B cell (primary cell): ENCODE measurements at regions of chr14 and their contacts with region 1.

Region 1: DNA sequence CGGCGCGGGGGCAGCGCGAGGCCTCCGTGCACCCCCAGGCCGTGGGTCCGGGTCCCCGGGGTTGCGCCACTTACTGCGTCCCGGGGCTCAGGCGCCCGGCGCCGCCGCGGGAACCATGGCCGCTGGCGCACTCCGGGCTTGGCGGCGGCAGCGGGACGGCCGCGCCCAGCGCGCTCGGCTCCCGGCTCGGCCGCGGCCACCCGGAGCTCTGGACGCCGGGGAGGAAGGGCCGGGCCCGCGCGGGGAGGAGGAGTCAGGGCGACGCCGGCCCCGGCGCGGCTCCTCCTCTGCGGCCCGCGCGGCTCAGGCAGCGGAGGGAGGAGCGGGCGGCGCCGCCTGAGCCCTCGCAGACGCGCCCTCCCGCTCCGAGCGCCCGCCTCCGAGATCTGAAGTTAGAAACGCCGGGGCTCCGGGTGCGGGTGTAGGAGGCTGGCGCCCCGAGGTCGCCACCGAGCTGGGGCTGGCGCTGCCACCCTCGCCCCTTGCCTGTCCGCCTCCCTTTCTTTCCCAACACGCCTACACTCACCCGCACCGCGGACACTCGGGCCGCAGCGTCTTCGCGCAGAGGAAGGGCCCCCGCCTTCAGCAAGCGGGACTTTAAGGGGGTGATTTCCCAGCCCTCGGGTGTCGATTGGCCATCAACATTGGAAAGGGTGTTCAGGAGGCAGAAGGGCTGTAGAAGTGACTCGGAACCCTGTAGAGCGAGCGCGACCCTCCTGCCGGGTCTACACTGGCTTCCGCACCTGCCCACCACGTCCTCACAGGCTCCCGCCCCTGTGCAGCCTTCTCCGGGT is at the start of gene NIN:
- DNase-seq: peak; percentile 88
- ATAC-seq: peak; percentile 83
- H3K4me3 ChIP-seq: peak within 1 kb of the TSS; percentile 70 to 90 (median 71)
- H3K4me3 Mint-ChIP-seq: peak within 1 kb of the TSS; percentile 99
- H3K27ac ChIP-seq: peak within 1 kb of the TSS; percentile 93 to 95
- H3K27ac Mint-ChIP-seq: peak within 1 kb of the TSS; percentile 99
- H3K4me1 ChIP-seq: peaks cover 49 to 60% of the 10 kb centered on the region in 2 donors
- H3K4me1 Mint-ChIP-seq: peaks cover 66% of the 10 kb centered on the region
- H3K27me3 ChIP-seq: no peaks in the 10 kb centered on the region
- H3K27me3 Mint-ChIP-seq: no peaks in the 10 kb centered on the region
- CTCF ChIP-seq: no peak
- total RNA-seq, gene NIN: 211 and 219 TPM in 2 replicates

Region 2: GRCh38 chr14:49451938-49452337 is 1379.2 kb before region 1 on chr14:
- CTCF ChIA-PET with region 1: no interaction called
- POLR2A ChIA-PET with region 1: no interaction called
- intact Hi-C with region 1: no loop called
- DNase-seq: no peak
- ATAC-seq: no peak
- H3K4me3 ChIP-seq: no peak overlapping the region
- H3K4me3 Mint-ChIP-seq: no peak overlapping the region
- H3K27ac ChIP-seq: no peak overlapping the region
- H3K27ac Mint-ChIP-seq: no peak overlapping the region
- H3K4me1 ChIP-seq: no peaks in the 10 kb centered on the region
- H3K4me1 Mint-ChIP-seq: no peaks in the 10 kb centered on the region
- H3K27me3 ChIP-seq: peaks cover 0 to 5% (median 2%) of the 10 kb centered on the region in 4 experiments
- H3K27me3 Mint-ChIP-seq: peaks cover 37% of the 10 kb centered on the region
- CTCF ChIP-seq: no peak

Region 3: DNA sequence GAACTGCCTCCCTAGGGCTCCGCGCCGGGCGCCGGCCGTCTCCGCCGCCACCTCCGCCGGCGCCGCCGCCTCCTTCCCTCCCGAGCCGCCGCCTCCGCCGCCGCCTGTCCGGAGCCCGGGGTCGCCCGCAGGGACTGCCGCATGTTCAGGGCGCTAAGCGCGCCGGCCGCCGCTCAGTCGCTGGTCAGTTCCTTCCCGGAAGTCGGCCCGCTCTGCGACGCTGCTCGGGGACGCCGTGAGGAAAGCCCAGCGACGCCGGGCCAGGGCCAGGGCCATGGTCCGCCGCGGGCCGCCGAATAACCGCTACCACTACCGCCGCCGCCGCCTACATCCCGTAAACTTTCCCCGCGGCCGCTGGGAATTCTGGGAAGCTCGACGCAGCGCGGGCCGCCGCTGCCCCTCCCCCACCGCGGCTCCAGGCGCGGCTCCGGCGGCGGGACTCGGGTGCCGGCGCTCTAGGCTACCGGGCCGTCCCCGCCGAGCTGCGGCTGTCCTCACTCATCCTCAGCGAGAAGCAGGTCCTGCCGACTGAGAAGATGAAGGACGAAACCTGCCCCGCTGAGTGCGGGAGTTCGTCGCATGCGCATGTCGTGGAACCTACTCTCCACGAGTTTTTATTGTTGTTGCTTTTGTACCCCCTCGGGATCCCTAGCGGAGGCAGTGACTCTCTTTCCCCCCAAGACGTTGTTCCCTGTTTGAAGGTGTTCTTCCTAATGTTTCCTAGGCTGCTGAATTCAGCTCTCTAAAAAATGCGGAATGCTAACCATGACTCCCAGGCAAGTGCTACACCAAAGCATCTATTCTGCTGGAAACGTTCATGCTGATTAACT is 162.9 kb before region 1 on chr14 and contains the start of gene SAV1:
- CTCF ChIA-PET with region 1: no interaction called
- POLR2A ChIA-PET with region 1: no interaction called
- intact Hi-C with region 1: loop called (anchors 5 kb)
- DNase-seq: peak; percentile 80
- ATAC-seq: peak; percentile 63
- H3K4me3 ChIP-seq: peak within 1 kb of the TSS; percentile 47 to 93 (median 70)
- H3K4me3 Mint-ChIP-seq: no peak within 1 kb of the TSS
- H3K27ac ChIP-seq: peak within 1 kb of the TSS; percentile 83 to 91
- H3K27ac Mint-ChIP-seq: no peak within 1 kb of the TSS
- H3K4me1 ChIP-seq: peaks cover 22 to 42% of the 10 kb centered on the region in 2 donors
- H3K4me1 Mint-ChIP-seq: peaks cover 26% of the 10 kb centered on the region
- H3K27me3 ChIP-seq: no peaks in the 10 kb centered on the region
- H3K27me3 Mint-ChIP-seq: no peaks in the 10 kb centered on the region
- CTCF ChIP-seq: no peak
- total RNA-seq, gene SAV1: 36.1 and 39.7 TPM in 2 replicates

Region 4: GRCh38 chr14:50756300-50756699 is 74.8 kb before region 1 on chr14:
- CTCF ChIA-PET with region 1: interaction called, 3 read pairs
- POLR2A ChIA-PET with region 1: no interaction called
- intact Hi-C with region 1: loop called (anchors 2 kb)
- DNase-seq: peak; percentile 95
- ATAC-seq: peak; percentile 93
- H3K4me3 ChIP-seq: no peak overlapping the region
- H3K4me3 Mint-ChIP-seq: no peak overlapping the region
- H3K27ac ChIP-seq: peak overlapping the region; percentile 92 to 93
- H3K27ac Mint-ChIP-seq: no peak overlapping the region
- H3K4me1 ChIP-seq: peaks cover 15 to 21% of the 10 kb centered on the region in 2 donors
- H3K4me1 Mint-ChIP-seq: peaks cover 4% of the 10 kb centered on the region
- H3K27me3 ChIP-seq: no peaks in the 10 kb centered on the region
- H3K27me3 Mint-ChIP-seq: no peaks in the 10 kb centered on the region
- CTCF ChIP-seq: no peak

Region 5: DNA sequence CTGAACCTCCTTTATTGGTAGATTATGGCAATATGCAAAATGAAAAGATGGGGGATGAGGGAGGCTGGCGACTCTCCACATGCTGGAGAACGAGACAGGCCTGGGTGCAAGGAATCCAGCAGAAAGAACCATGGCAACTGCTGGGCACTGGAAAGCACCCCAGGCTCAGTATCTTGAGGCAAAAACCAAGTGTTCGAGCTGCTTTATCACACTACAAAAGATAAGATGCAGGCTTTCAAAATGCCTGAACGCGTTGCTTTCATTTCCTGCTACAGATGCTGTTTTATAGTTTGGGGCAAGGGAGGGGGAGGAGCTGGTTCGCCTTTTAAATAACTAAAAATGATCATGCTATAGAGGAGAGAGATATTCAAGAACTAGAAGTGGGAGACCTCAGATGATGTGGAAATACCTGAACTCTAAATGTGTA is 39.1 kb before region 1 on chr14:
- CTCF ChIA-PET with region 1: interaction called, 8 read pairs
- POLR2A ChIA-PET with region 1: interaction called, 16 read pairs
- intact Hi-C with region 1: loop called (anchors 1 kb)
- DNase-seq: peak; percentile 64
- ATAC-seq: peak; percentile 26
- H3K4me3 ChIP-seq: peak overlapping the region in 3 of 5 experiments; percentile 5 to 41 (median 24)
- H3K4me3 Mint-ChIP-seq: peak overlapping the region; percentile 61
- H3K27ac ChIP-seq: peak overlapping the region; percentile 42 to 91
- H3K27ac Mint-ChIP-seq: peak overlapping the region; percentile 73
- H3K4me1 ChIP-seq: peaks cover 99 to 100% of the 10 kb centered on the region in 2 donors
- H3K4me1 Mint-ChIP-seq: peaks cover 96% of the 10 kb centered on the region
- H3K27me3 ChIP-seq: no peaks in the 10 kb centered on the region
- H3K27me3 Mint-ChIP-seq: no peaks in the 10 kb centered on the region
- CTCF ChIP-seq: no peak

Region 6: DNA sequence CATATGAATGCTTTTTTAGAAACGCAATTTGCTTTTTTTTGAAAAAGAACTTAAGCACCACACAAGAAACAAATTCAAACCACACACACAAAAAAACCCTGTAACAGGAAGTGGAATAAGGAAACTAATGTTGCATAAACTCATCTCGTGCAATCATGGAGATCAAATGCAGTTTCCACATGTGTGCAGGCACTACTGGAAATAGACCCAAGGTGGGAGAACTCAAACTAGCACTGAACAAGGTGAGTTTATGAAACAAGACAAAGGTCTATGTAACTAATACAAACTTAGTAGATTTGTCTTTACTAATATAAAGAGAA is 17.6 kb before region 1 on chr14:
- CTCF ChIA-PET with region 1: interaction called, 5 read pairs
- POLR2A ChIA-PET with region 1: interaction called, 3 read pairs
- intact Hi-C with region 1: loop called (anchors 2 kb)
- DNase-seq: peak; percentile 67
- ATAC-seq: peak; percentile 72
- H3K4me3 ChIP-seq: peak overlapping the region in 4 of 5 experiments; percentile 10 to 57 (median 40)
- H3K4me3 Mint-ChIP-seq: peak overlapping the region; percentile 84
- H3K27ac ChIP-seq: peak overlapping the region; percentile 38 to 54
- H3K27ac Mint-ChIP-seq: peak overlapping the region; percentile 90
- H3K4me1 ChIP-seq: peaks cover 46 to 49% of the 10 kb centered on the region in 2 donors
- H3K4me1 Mint-ChIP-seq: peaks cover 60% of the 10 kb centered on the region
- H3K27me3 ChIP-seq: no peaks in the 10 kb centered on the region
- H3K27me3 Mint-ChIP-seq: no peaks in the 10 kb centered on the region
- CTCF ChIP-seq: no peak

Region 7: DNA sequence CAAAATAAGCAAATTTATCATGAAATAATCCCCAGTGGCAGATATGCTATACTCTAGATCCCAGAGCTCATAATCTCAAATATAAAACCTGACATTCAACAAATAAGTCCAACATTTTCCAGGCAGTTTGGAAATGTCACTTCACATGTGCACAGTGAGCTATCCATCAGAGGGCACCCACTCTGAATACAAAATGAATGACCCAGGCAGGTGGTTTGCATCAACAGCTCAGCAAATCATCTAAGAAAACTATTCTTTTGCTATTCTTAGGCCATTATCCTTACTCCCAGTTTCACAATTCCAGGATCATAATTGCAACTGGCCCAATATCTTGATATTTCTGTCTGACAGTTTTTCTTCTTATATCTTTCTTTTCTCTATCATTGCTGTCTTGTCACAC is 225.3 kb after region 1 on chr14:
- CTCF ChIA-PET with region 1: no interaction called
- POLR2A ChIA-PET with region 1: no interaction called
- intact Hi-C with region 1: no loop called
- DNase-seq: no peak
- ATAC-seq: no peak
- H3K4me3 ChIP-seq: no peak overlapping the region
- H3K4me3 Mint-ChIP-seq: no peak overlapping the region
- H3K27ac ChIP-seq: no peak overlapping the region
- H3K27ac Mint-ChIP-seq: no peak overlapping the region
- H3K4me1 ChIP-seq: no peaks in the 10 kb centered on the region
- H3K4me1 Mint-ChIP-seq: no peaks in the 10 kb centered on the region
- H3K27me3 ChIP-seq: no peaks in the 10 kb centered on the region
- H3K27me3 Mint-ChIP-seq: no peaks in the 10 kb centered on the region
- CTCF ChIP-seq: no peak